CD8-positive, alpha-beta T cell (primary cell): ENCODE measurements at regions of chr19 and their contacts with region 1.

Region 1: GRCh38 chr19:18152444-18152816 is 533 bp upstream of the PIK3R2 start:
- DNase-seq: peak; percentile 94 to 99 (median 99)
- ATAC-seq: peak; percentile 65
- H3K4me3 ChIP-seq: peak overlapping the region; percentile 66 to 71
- H3K4me3 Mint-ChIP-seq: peak overlapping the region; percentile 84
- H3K27ac ChIP-seq: peak overlapping the region; percentile 66 to 87
- H3K27ac Mint-ChIP-seq: peak overlapping the region; percentile 95
- H3K4me1 ChIP-seq: peaks cover 17% of the 10 kb centered on the region
- H3K4me1 Mint-ChIP-seq: peaks cover 23% of the 10 kb centered on the region
- H3K27me3 ChIP-seq: no peaks in the 10 kb centered on the region
- H3K27me3 Mint-ChIP-seq: no peaks in the 10 kb centered on the region
- CTCF ChIP-seq: peak; percentile 87

Region 2: GRCh38 chr19:17470068-17470841 is 682.2 kb before region 1 on chr19 and contains the start of gene SLC27A1:
- CTCF ChIA-PET with region 1: no interaction called
- POLR2A ChIA-PET with region 1: no interaction called
- intact Hi-C with region 1: no loop called
- DNase-seq: peak; percentile 77 to 96 (median 91)
- ATAC-seq: peak; percentile 74
- H3K4me3 ChIP-seq: peak within 1 kb of the TSS; percentile 62 to 86
- H3K4me3 Mint-ChIP-seq: peak within 1 kb of the TSS; percentile 93
- H3K27ac ChIP-seq: peak within 1 kb of the TSS; percentile 45 to 80
- H3K27ac Mint-ChIP-seq: peak within 1 kb of the TSS; percentile 89
- H3K4me1 ChIP-seq: peaks cover 22% of the 10 kb centered on the region
- H3K4me1 Mint-ChIP-seq: peaks cover 33% of the 10 kb centered on the region
- H3K27me3 ChIP-seq: no peaks in the 10 kb centered on the region
- H3K27me3 Mint-ChIP-seq: no peaks in the 10 kb centered on the region
- CTCF ChIP-seq: no peak
- total RNA-seq, gene SLC27A1: 8.1 to 9.4 TPM

Region 3: GRCh38 chr19:17947815-17948513 is 204.5 kb before region 1 on chr19:
- CTCF ChIA-PET with region 1: no interaction called
- POLR2A ChIA-PET with region 1: interaction called, 3 read pairs
- intact Hi-C with region 1: loop called in 1 of 2 experiments (anchors 1 kb)
- DNase-seq: peak; percentile 88 to 99 (median 95)
- ATAC-seq: peak; percentile 66
- H3K4me3 ChIP-seq: peak overlapping the region; percentile 35 to 57
- H3K4me3 Mint-ChIP-seq: peak overlapping the region; percentile 74
- H3K27ac ChIP-seq: peak overlapping the region; percentile 44 to 93
- H3K27ac Mint-ChIP-seq: no peak overlapping the region
- H3K4me1 ChIP-seq: peaks cover 53% of the 10 kb centered on the region
- H3K4me1 Mint-ChIP-seq: peaks cover 49% of the 10 kb centered on the region
- H3K27me3 ChIP-seq: peaks cover 39% of the 10 kb centered on the region in 2 experiments
- H3K27me3 Mint-ChIP-seq: peaks cover 30% of the 10 kb centered on the region
- CTCF ChIP-seq: no peak

Region 4: GRCh38 chr19:18007044-18007916 is 145.2 kb before region 1 on chr19:
- CTCF ChIA-PET with region 1: interaction called, 3 read pairs
- POLR2A ChIA-PET with region 1: interaction called, 4 read pairs
- intact Hi-C with region 1: loop called (anchors 1 kb)
- DNase-seq: peak; percentile 66 to 90 (median 80)
- ATAC-seq: peak; percentile 57
- H3K4me3 ChIP-seq: peak overlapping the region; percentile 48 to 61
- H3K4me3 Mint-ChIP-seq: peak overlapping the region; percentile 88
- H3K27ac ChIP-seq: peak overlapping the region; percentile 69 to 72
- H3K27ac Mint-ChIP-seq: peak overlapping the region; percentile 89
- H3K4me1 ChIP-seq: peaks cover 43% of the 10 kb centered on the region
- H3K4me1 Mint-ChIP-seq: peaks cover 40% of the 10 kb centered on the region
- H3K27me3 ChIP-seq: no peaks in the 10 kb centered on the region
- H3K27me3 Mint-ChIP-seq: no peaks in the 10 kb centered on the region
- CTCF ChIP-seq: peak; percentile 97

Region 5: DNA sequence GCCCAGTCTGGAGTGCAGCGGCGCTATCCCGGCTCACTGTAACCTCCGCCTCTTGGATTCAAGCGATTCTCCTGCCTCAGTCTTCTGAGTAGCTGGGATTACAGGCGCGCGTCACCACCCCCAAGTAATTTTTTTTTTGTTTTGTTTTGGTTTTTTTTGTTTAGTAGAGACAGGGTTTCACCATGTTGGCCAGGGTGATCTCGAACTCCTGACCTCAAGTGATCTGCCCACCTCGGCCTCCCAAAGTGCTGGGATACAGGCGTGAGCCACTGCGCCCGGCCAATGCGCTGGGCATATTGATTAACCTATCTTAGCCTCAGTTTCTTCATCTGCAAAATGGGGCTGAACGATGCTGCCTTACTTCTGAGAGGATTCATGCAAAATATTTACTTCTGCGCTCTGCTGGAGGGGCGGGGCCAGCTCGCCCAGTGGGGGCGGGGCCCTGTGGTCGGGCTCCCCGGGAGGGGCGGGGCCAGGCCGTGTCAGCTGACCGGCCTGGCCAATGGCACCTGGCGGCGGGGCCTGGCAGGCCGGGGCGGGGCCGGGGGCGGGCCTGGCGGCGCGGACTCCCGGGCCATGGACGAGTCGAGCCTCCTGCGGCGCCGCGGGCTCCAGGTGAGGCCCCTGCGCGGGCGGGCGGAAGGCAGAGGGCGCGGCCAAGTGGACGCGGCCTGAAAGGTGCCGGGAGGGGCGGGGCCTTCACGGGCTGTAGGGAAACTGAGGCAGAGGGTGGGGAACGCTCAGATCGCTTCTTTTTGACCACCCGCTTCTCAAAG is 55.0 kb before region 1 on chr19 and contains the start of gene MAST3:
- CTCF ChIA-PET with region 1: no interaction called
- POLR2A ChIA-PET with region 1: interaction called, 10 read pairs
- intact Hi-C with region 1: loop called in 1 of 2 experiments (anchors 2 kb)
- DNase-seq: peak; percentile 84 to 95 (median 92)
- ATAC-seq: peak; percentile 96
- H3K4me3 ChIP-seq: peak within 1 kb of the TSS; percentile 63 to 66
- H3K4me3 Mint-ChIP-seq: peak within 1 kb of the TSS; percentile 89
- H3K27ac ChIP-seq: peak within 1 kb of the TSS; percentile 26 to 40
- H3K27ac Mint-ChIP-seq: peak within 1 kb of the TSS; percentile 72
- H3K4me1 ChIP-seq: peaks cover 35% of the 10 kb centered on the region
- H3K4me1 Mint-ChIP-seq: peaks cover 47% of the 10 kb centered on the region
- H3K27me3 ChIP-seq: no peaks in the 10 kb centered on the region
- H3K27me3 Mint-ChIP-seq: no peaks in the 10 kb centered on the region
- CTCF ChIP-seq: no peak
- total RNA-seq, gene MAST3: 13.7 to 15.2 TPM

Region 6: DNA sequence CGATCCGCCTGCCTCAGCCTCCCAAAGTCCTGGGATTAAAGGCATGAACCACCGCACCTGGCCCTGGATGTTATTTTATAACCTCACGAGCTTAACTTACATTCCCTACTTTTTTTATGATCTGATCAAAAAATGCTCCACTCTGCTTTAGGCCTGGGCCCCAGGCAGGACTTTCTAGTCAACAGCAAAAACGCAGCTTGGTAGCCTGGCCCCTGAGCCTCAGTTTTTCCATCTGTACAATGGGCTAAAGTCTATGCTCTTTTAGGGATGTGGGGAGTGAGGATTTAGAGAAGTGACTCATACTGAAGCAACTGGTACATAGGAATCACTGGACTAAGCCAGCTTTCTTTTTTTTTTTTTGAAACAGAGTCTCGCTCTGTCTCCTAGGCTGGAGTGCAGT is 11.4 kb before region 1 on chr19:
- CTCF ChIA-PET with region 1: interaction called, 12 read pairs
- POLR2A ChIA-PET with region 1: interaction called, 5 read pairs
- intact Hi-C with region 1: no loop called
- DNase-seq: no peak
- ATAC-seq: no peak
- H3K4me3 ChIP-seq: no peak overlapping the region
- H3K4me3 Mint-ChIP-seq: no peak overlapping the region
- H3K27ac ChIP-seq: no peak overlapping the region
- H3K27ac Mint-ChIP-seq: no peak overlapping the region
- H3K4me1 ChIP-seq: no peaks in the 10 kb centered on the region
- H3K4me1 Mint-ChIP-seq: no peaks in the 10 kb centered on the region
- H3K27me3 ChIP-seq: no peaks in the 10 kb centered on the region
- H3K27me3 Mint-ChIP-seq: no peaks in the 10 kb centered on the region
- CTCF ChIP-seq: no peak

Region 7: DNA sequence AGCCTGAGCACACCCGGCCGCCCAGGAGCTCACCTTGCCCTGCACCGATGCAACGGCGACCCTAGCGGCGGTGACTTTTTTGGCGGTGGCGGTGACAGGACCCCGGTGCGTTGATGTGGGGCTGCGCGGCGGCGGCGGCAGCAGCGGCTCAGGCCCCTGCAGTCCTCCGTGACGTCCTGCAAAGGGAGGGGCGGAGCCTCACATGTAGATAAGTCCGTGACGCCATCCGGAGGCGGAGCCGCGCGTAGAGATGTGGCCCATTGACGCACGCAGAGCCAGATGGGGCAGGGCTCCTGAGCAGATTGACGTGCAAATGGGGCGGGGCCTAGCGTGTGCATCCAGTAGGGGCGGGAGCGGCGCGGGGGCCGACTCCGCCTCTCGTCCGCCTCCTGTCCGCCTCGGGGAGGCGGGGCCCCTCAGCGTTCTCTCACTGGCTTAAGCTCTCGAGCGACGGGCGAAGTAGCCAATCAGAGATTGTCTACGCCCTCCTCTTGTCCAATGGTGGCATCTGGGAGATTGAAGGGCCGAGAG is 51.5 kb after region 1 on chr19 and contains the start of gene RAB3A:
- CTCF ChIA-PET with region 1: no interaction called
- POLR2A ChIA-PET with region 1: no interaction called
- intact Hi-C with region 1: loop called (anchors 1 kb)
- DNase-seq: peak; percentile 98 to 100 (median 100)
- ATAC-seq: peak; percentile 90
- H3K4me3 ChIP-seq: peak within 1 kb of the TSS; percentile 60 to 91
- H3K4me3 Mint-ChIP-seq: peak within 1 kb of the TSS; percentile 96
- H3K27ac ChIP-seq: peak within 1 kb of the TSS; percentile 76 to 81
- H3K27ac Mint-ChIP-seq: peak within 1 kb of the TSS; percentile 96
- H3K4me1 ChIP-seq: peaks cover 17% of the 10 kb centered on the region
- H3K4me1 Mint-ChIP-seq: peaks cover 21% of the 10 kb centered on the region
- H3K27me3 ChIP-seq: no peaks in the 10 kb centered on the region
- H3K27me3 Mint-ChIP-seq: peaks cover 5% of the 10 kb centered on the region
- CTCF ChIP-seq: no peak
- total RNA-seq, gene RAB3A: 16.8 to 19.4 TPM

Region 8: GRCh38 chr19:18214779-18215433 is 62.5 kb after region 1 on chr19:
- CTCF ChIA-PET with region 1: no interaction called
- POLR2A ChIA-PET with region 1: no interaction called
- intact Hi-C with region 1: no loop called
- DNase-seq: no peak
- ATAC-seq: no peak
- H3K4me3 ChIP-seq: no peak overlapping the region
- H3K4me3 Mint-ChIP-seq: no peak overlapping the region
- H3K27ac ChIP-seq: no peak overlapping the region
- H3K27ac Mint-ChIP-seq: no peak overlapping the region
- H3K4me1 ChIP-seq: no peaks in the 10 kb centered on the region
- H3K4me1 Mint-ChIP-seq: no peaks in the 10 kb centered on the region
- H3K27me3 ChIP-seq: no peaks in the 10 kb centered on the region
- H3K27me3 Mint-ChIP-seq: peaks cover 6% of the 10 kb centered on the region
- CTCF ChIP-seq: no peak

Region 9: DNA sequence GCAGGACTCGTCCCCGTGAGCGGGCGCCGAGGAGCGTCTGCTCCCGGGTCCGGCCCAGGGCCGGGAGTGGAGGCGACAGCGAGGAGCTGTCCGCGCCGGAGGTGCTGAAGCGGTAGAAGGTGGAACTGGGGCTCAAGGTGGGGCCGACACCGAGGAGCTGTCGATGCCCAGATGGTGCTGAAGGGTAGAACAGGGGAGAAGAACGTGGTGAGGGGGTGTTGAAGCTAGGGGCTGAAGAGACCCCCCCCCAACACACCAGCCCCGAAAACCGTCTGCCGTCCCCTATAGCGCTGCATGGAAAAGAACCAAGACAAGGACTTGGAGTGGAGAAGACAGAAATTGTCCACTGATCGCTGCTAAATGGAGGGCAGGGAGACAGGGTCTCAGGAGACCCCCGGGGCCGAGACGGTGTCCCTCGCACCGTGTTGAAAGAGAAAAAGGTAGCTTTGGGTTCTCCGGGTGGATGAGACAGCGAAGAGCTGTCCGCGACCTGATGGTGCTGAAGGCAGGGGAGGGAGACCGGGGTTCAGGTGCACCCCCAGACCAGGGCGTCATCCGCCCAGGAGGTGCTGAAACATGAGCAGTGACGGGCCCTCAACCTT is 80.9 kb after region 1 on chr19:
- CTCF ChIA-PET with region 1: no interaction called
- POLR2A ChIA-PET with region 1: no interaction called
- intact Hi-C with region 1: no loop called
- DNase-seq: peak in 7 of 9 experiments; percentile 17 to 70 (median 56)
- ATAC-seq: peak; percentile 90
- H3K4me3 ChIP-seq: no peak overlapping the region
- H3K4me3 Mint-ChIP-seq: no peak overlapping the region
- H3K27ac ChIP-seq: no peak overlapping the region
- H3K27ac Mint-ChIP-seq: no peak overlapping the region
- H3K4me1 ChIP-seq: no peaks in the 10 kb centered on the region
- H3K4me1 Mint-ChIP-seq: no peaks in the 10 kb centered on the region
- H3K27me3 ChIP-seq: peaks cover 34 to 35% of the 10 kb centered on the region in 2 experiments
- H3K27me3 Mint-ChIP-seq: peaks cover 61% of the 10 kb centered on the region
- CTCF ChIP-seq: no peak